ENCODE measurements at regions of chr5 and their contacts with region 1.

Region 1: DNA sequence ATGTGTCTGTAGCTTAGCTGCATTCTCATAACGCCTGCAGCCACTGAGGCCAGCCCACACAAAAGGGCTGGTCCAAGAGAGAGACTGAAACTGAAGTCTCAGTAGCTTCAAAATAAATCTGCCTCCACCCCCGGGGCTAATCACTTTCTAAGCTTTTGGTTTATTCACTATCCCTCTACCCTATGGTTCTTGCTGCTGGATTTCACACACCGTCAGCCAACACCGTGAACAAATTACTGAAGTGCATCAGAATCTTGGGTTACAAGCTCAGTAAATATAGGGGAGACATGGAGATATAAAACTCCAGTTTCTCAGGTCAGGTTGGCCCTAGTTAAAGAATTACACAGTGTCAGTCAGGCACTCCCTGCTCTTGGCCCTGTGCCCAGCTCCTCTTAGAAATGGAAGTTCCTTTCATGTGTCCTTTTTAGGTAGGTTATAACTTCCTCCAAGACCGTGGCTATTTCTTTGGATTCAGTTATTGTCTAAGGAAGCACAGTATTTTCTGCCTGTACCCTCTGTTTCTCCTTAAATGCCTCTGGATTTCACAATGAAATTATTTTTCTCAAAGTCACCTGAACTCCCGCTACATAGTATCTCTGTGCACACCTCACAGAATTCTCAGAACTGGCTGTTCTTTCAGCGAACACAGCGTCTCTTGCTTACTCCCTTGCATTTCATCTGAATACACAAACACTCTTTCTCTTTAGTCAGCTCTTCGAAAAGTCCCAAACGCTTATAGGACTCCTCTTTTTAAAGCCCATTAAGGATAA is 112.5 kb downstream of the FAM174A start:
- DNase-seq: peak; percentile 85
- H3K4me3 Mint-ChIP-seq: peak overlapping the region; percentile 55
- H3K27ac Mint-ChIP-seq: peak overlapping the region; percentile 41
- H3K4me1 Mint-ChIP-seq: peaks cover 31% of the 10 kb centered on the region
- H3K27me3 Mint-ChIP-seq: no peaks in the 10 kb centered on the region
- CTCF ChIP-seq: no peak

Region 2: GRCh38 chr5:100667161-100667630 is 19.6 kb after region 1 on chr5:
- CTCF ChIA-PET with region 1: interaction called, 4 read pairs
- intact Hi-C with region 1: loop called (anchors 1 kb)
- DNase-seq: no peak
- H3K4me3 Mint-ChIP-seq: no peak overlapping the region
- H3K27ac Mint-ChIP-seq: peak overlapping the region; percentile 64
- H3K4me1 Mint-ChIP-seq: peaks cover 12% of the 10 kb centered on the region
- H3K27me3 Mint-ChIP-seq: no peaks in the 10 kb centered on the region
- CTCF ChIP-seq: no peak

Region 3: DNA sequence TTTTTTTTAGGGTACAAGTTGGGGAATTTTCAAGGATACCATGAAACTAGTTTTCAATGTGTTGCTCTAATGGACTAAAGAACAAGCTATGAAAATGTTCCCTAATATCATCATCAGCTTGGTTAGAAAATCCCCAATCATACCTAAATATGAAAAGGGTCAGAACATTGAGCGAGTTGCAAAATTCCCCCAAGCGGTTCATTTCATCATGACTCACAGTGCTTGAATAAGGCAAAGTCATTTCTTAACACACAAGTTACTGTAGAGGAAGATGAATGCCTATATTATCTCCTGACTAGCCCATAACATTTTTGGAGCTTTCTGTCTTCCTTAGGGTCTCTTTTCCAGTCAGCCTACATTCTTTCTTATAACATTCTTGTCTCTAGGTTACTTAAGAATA is 192.7 kb after region 1 on chr5:
- CTCF ChIA-PET with region 1: no interaction called
- intact Hi-C with region 1: loop called (anchors 5 kb)
- DNase-seq: peak; percentile 12
- H3K4me3 Mint-ChIP-seq: no peak overlapping the region
- H3K27ac Mint-ChIP-seq: no peak overlapping the region
- H3K4me1 Mint-ChIP-seq: peaks cover 25% of the 10 kb centered on the region
- H3K27me3 Mint-ChIP-seq: no peaks in the 10 kb centered on the region
- CTCF ChIP-seq: no peak

Measured in Calu3 (cell line).